ENCODE measurements at regions of chr3 and their contacts with region 1.

Region 1: DNA sequence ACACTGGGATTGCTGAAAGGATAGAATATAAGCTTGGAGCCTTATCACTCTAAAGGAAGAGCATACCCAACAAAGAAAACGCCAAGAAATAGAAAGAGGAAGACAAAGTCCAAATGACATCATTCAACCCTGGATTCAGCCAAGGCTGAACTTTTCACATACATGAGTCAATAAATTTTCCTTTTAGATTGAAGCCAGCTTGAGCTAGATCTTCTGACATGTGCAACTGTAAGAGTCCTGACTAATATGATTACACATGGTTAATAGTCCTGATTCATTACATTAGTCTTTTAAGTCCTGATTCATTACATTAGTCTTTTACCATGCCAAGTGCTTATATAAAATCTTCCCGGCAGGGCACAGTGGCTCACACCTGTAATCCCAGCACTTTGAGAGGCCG is 13.6 kb upstream of the DENND6A start:
- DNase-seq: peak in 1 of 2 donors; percentile 68
- H3K4me3 ChIP-seq: no peak overlapping the region
- H3K27ac ChIP-seq: peak overlapping the region in 2 of 5 donors; percentile 34 to 36
- H3K4me1 ChIP-seq: peaks cover 0 to 20% (median 4%) of the 10 kb centered on the region in 4 donors
- H3K27me3 ChIP-seq: no peaks in the 10 kb centered on the region
- CTCF ChIP-seq: no peak
- EP300 ChIP-seq: no peak
- POLR2A ChIP-seq: no peak

Region 2: GRCh38 chr3:57755668-57756527 is 49.4 kb after region 1 on chr3 and contains the start of gene SLMAP:
- intact Hi-C with region 1: loop called (anchors 10 kb)
- DNase-seq: peak; percentile 98 to 99
- H3K4me3 ChIP-seq: peak within 1 kb of the TSS; percentile 80 to 98 (median 94)
- H3K27ac ChIP-seq: peak within 1 kb of the TSS; percentile 77 to 95 (median 88)
- H3K4me1 ChIP-seq: peaks cover 18 to 47% (median 40%) of the 10 kb centered on the region in 4 donors
- H3K27me3 ChIP-seq: no peaks in the 10 kb centered on the region
- CTCF ChIP-seq: no peak
- EP300 ChIP-seq: no peak
- POLR2A ChIP-seq: peak in 1 of 4 donors; percentile 22
- total RNA-seq, gene SLMAP: 123 to 534 (median 292) TPM

Region 3: DNA sequence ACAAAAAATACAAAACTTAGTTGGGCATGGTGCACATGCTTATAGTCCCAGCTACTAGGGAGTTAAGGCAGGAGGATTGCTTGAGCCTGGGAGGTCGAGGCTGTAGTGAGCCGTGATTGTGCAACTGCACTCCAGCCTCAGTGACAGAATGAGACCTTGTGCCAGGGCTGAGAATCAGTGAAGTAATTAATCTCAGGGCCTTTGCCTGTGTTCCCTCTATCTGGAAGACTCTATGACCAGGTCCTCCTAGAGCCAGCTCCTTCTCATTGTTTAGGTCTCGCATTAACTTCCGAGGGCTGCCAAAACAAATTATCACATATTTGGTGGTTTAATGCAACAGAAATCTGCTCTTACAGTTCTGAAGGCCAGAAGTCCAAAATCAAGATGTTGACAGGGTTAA is 260.4 kb after region 1 on chr3:
- intact Hi-C with region 1: no loop called
- DNase-seq: no peak
- H3K4me3 ChIP-seq: no peak overlapping the region
- H3K27ac ChIP-seq: peak overlapping the region in 3 of 5 donors; percentile 32 to 57 (median 46)
- H3K4me1 ChIP-seq: peaks cover 0 to 39% (median 14%) of the 10 kb centered on the region in 4 donors
- H3K27me3 ChIP-seq: no peaks in the 10 kb centered on the region
- CTCF ChIP-seq: no peak
- EP300 ChIP-seq: no peak
- POLR2A ChIP-seq: no peak

Measured in stomach (tissue), 19 donors.